Heart left ventricle (tissue), 16 donors: ENCODE measurements at regions of chrX and their contacts with region 1.

Region 1: GRCh38 chrX:104136241-104137019 is 20.4 kb downstream of the SLC25A53 start:
- DNase-seq: peak in 4 of 5 donors; percentile 61 to 67 (median 64)
- ATAC-seq: peak; percentile 83 to 91 (median 88)
- H3K4me3 ChIP-seq: peak overlapping the region in 10 of 12 donors; percentile 10 to 59 (median 45)
- H3K27ac ChIP-seq: peak overlapping the region in 3 of 12 donors; percentile 30 to 53 (median 46)
- H3K4me1 ChIP-seq: peaks cover 0 to 11% (median 2%) of the 10 kb centered on the region in 12 donors
- H3K27me3 ChIP-seq: peaks cover 0 to 5% (median 0%) of the 10 kb centered on the region in 9 donors
- CTCF ChIP-seq: peak; percentile 52 to 86 (median 70)
- POLR2A ChIP-seq: no peak

Region 2: DNA sequence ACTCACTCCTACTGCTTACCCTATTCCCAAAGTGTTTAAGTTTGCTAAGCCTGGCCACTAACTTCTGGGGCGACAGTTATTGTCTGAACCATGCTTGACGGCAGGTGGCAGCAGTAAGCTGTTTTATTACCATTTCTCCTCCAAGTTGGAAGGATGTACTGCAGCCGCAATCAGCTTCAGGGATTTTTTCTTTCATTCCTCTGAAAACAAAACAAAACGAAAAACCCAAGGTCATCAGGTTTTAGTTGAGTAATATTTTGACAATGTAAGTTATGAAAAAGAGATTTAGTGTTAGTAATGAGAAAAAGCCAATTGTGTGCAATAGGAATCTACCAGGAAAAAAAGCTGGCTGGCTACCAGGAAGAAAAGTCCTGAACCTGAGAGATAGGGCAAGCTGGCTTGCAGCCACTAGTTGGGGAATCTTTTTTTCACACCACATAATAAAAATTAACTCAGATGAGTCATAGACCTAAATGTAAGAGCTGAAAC is 291.2 kb before region 1 on chrX:
- intact Hi-C with region 1: loop called in 3 of 10 experiments (anchors 5 to 10 kb)
- DNase-seq: peak in 4 of 5 donors; percentile 28 to 55 (median 46)
- ATAC-seq: peak in 3 of 4 donors; percentile 57 to 78 (median 73)
- H3K4me3 ChIP-seq: peak overlapping the region in 1 of 12 donors; percentile 5
- H3K27ac ChIP-seq: no peak overlapping the region
- H3K4me1 ChIP-seq: peaks cover 0 to 6% (median 0%) of the 10 kb centered on the region in 12 donors
- H3K27me3 ChIP-seq: peaks cover 0 to 21% (median 0%) of the 10 kb centered on the region in 9 donors
- CTCF ChIP-seq: peak; percentile 39 to 67 (median 56)
- POLR2A ChIP-seq: no peak

Region 3: GRCh38 chrX:104018126-104018525 is 118.3 kb before region 1 on chrX:
- intact Hi-C with region 1: no loop called
- DNase-seq: no peak
- ATAC-seq: no peak
- H3K4me3 ChIP-seq: no peak overlapping the region
- H3K27ac ChIP-seq: no peak overlapping the region
- H3K4me1 ChIP-seq: no peaks in the 10 kb centered on the region
- H3K27me3 ChIP-seq: peaks cover 0 to 30% (median 0%) of the 10 kb centered on the region in 9 donors
- CTCF ChIP-seq: no peak
- POLR2A ChIP-seq: no peak

Region 4: DNA sequence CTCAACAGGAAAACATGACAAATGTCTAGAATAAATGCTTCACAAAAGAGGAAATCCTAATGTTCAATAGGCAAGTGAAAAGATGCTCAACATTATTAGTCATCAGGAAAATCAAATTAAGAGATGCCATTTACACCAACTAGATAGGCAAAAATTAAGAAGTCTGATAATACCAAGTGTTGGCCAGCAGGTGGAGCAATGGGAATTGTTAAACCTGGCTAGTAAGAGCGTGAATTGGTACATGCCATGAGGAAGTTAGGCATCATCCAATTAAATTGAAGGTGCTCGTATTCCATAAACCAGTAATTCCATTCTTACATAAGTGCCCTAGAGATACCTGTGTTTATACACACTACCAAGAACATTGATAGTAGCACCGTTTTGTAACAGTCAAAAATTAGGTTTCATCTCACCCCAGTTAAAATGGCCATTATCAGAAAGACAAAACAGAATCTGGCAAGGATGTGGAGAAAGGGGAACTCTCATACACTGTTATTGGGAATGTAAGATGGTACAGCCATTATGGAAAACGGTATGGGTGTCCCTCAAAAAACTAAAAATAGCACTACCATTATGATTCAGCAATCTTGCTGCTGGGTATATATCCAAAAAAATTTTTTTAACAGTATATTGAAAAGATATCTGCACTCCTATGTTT is 38.1 kb before region 1 on chrX:
- intact Hi-C with region 1: loop called in 5 of 10 experiments (anchors 1 to 2 kb)
- DNase-seq: peak in 2 of 5 donors; percentile 33 to 35
- ATAC-seq: peak in 3 of 4 donors; percentile 39 to 57 (median 46)
- H3K4me3 ChIP-seq: no peak overlapping the region
- H3K27ac ChIP-seq: no peak overlapping the region
- H3K4me1 ChIP-seq: no peaks in the 10 kb centered on the region
- H3K27me3 ChIP-seq: peaks cover 0 to 45% (median 0%) of the 10 kb centered on the region in 9 donors
- CTCF ChIP-seq: peak; percentile 41 to 72 (median 58)
- POLR2A ChIP-seq: no peak

Region 5: DNA sequence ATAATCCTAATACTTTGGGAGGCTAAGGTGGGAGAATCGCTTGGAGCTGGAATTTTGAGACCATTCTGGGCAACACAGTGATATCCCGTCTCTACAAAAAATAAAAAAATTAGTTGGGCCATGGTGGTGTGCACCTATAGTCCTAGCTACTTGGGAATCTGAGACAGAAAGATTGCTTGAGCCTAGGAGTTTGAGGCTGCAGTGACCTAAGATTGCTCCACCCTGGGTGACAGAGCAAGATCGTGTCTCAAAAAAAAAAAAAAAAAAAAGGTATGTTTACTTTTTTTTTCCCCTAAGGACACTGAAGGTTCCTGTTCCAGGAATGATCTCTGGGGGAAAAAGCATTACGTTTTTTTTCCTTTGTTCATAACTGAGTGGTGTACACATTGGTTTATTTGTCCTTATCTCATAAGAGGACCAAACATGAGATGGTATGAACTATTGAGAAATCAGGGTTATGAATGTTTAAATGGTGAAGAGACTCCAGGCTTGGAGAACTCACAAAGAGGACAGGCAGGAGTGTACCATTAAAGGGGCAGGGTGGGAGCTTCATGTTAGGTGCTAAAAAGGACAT is 309.1 kb after region 1 on chrX:
- intact Hi-C with region 1: no loop called
- DNase-seq: no peak
- ATAC-seq: no peak
- H3K4me3 ChIP-seq: no peak overlapping the region
- H3K27ac ChIP-seq: no peak overlapping the region
- H3K4me1 ChIP-seq: no peaks in the 10 kb centered on the region
- H3K27me3 ChIP-seq: peaks cover 0 to 15% (median 0%) of the 10 kb centered on the region in 9 donors
- CTCF ChIP-seq: no peak
- POLR2A ChIP-seq: no peak